ENCODE measurements at regions of chr10 and their contacts with region 1.

Region 1: DNA sequence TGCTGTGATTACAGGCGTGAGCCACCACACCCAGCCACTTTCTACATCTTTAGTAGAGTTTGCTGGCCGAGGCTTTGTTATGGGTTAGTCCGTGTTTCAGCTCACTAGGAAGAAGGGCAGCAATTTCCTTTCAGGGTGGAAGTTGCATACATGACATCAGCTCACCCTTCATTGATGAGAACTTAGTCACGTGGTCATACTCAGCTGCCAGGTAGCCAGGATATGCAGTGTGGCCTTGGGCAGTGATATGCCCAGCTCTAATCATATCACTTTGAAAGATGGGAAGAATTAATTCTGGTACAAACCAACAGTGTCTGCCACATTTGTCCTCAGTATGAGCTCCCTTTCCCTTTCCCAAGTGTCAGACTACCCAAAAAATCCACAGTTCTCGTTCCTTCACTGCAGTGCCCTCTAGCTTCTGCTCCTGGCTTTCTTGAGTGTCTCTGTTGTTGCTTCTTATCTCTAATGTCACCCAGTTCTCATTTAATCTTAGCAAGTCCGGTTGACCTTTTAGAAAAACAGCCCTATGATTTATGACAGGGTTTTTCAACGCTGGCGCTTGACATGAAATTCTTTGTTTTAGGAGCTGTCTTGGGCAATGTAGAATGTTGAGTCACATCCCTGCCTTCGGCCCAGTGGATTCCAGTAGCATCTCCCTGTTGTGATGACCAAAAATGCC is 108.7 kb upstream of the ITGB1 start:
- DNase-seq: no peak
- ATAC-seq: peak; percentile 74
- H3K4me3 Mint-ChIP-seq: no peak overlapping the region
- H3K27ac Mint-ChIP-seq: no peak overlapping the region
- H3K4me1 Mint-ChIP-seq: peaks cover 8% of the 10 kb centered on the region
- H3K27me3 Mint-ChIP-seq: no peaks in the 10 kb centered on the region
- CTCF ChIP-seq: no peak

Region 2: DNA sequence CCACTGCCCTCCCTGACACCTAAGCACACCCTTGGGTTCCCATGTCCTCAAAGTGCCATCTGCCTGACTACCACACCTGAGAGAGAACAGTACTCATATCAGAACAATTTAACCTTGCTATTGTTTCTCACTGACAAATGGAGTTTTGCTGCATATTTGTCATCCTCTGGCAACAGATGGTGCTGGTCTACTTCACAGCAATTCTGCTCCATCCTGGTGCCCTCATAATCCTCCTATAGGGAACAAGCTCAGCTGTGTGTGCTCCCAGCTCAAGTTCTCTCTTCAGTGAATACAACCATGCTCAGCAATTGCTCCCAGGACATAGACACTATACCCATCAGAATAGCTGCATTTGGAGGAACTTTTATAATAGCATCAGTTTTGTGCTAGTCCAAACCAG is 75.9 kb before region 1 on chr10:
- CTCF ChIA-PET with region 1: no interaction called
- POLR2A ChIA-PET with region 1: no interaction called
- DNase-seq: no peak
- ATAC-seq: no peak
- H3K4me3 Mint-ChIP-seq: no peak overlapping the region
- H3K27ac Mint-ChIP-seq: no peak overlapping the region
- H3K4me1 Mint-ChIP-seq: peaks cover 15% of the 10 kb centered on the region
- H3K27me3 Mint-ChIP-seq: no peaks in the 10 kb centered on the region; the same call in 1 of the 2 replicates
- CTCF ChIP-seq: no peak

Region 3: DNA sequence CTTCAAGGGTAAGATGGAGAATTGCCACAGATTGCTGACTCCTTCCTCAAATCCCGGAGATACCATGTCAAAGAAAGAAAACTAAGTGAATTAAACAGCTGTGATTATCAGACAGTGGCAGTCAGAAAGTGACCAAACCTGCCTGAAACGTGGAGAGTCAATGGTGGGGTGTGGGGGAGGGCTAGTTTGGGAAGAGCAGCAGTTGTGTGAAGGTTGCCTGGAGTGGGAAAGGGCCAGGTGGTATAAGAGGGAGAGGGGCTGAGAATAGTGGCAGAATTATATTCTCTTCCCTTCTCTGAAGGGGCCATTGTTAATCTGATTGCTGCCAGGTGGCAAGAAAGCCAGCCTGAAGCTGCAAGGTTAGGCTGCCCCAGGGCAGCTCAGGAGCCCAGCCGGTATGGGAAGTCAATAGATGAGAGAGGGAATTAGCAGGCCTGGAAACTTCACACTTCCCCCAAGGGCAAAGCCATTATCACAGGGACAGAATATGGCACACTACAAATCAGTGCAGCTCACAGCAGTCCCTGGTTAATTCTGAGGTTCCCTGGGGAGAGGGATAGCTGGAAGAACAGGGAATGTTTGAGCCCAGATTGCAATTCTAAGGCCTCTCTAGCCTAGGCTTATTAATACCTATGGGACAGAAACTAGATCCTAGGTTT is 24.8 kb before region 1 on chr10:
- CTCF ChIA-PET with region 1: interaction called, 12 read pairs
- POLR2A ChIA-PET with region 1: no interaction called
- DNase-seq: no peak
- ATAC-seq: peak; percentile 85
- H3K4me3 Mint-ChIP-seq: no peak overlapping the region
- H3K27ac Mint-ChIP-seq: peak overlapping the region; percentile 52
- H3K4me1 Mint-ChIP-seq: peaks cover 44% of the 10 kb centered on the region
- H3K27me3 Mint-ChIP-seq: no peaks in the 10 kb centered on the region
- CTCF ChIP-seq: no peak

Measured in WTC11 (cell line).